HepG2 (cell line): ENCODE measurements at regions of chr1 and their contacts with region 1.

Region 1: DNA sequence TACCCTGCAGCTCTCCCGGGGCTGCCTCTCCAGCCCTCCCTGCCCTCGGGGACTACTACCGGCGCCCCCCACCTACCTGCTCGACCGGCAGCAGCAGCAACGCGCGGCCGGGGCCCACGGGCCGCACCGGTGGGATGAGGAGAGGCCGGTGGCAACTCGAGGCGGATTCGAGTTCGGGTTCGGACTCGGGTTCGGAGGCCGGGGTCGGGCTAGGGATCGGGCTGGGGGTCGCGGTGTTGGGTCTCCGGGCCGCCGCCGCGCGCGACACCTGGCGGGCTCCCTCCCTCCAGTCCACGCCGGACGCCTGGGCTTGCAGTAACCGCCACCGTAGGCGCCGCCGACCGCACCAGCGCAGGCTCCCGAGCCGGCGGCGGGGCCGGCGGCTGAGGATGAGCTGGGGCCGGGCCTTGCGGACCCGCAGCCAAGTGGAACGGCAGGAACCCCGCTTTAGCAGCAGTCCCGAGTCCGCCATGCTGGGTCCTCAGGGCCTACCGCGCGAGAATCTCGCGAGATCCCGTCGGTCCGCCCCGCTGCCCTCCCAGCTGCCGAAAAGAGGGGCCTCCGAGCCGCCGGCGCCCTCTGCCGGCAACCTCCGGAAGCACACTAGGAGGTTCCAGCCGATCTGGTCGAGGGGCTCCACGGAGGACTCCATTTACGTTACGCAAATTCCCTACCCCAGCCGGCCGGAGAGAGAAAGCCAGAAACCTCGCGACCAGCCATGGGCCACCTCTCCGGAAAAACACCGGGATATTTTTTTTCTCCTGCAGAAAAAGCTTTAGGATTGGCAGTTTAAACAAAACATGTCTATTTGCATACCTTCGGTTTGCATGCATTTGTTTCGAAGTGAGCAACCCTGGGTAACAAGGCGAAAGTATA is at the start of gene NOL9:
- DNase-seq: peak; percentile 84
- ATAC-seq: peak; percentile 93
- H3K4me3 ChIP-seq: peak within 1 kb of the TSS; percentile 93 to 98 (median 96)
- H3K27ac ChIP-seq: peak within 1 kb of the TSS; percentile 64
- H3K4me1 ChIP-seq: peaks cover 20% of the 10 kb centered on the region
- H3K27me3 ChIP-seq: no peaks in the 10 kb centered on the region; a peak in 1 of 5 replicates
- CTCF ChIP-seq: peak; percentile 93
- EP300 ChIP-seq: peak in 1 of 2 experiments; percentile 17; a peak in 1 of 4 replicates
- POLR2A ChIP-seq: peak; percentile 87 to 91
- RAD21 ChIP-seq: peak; percentile 80
- total RNA-seq, gene NOL9: 20.2 and 24.7 TPM in 2 replicates

Region 2: GRCh38 chr1:6171548-6172119 is 382.6 kb before region 1 on chr1:
- CTCF ChIA-PET with region 1: no interaction called
- POLR2A ChIA-PET with region 1: no interaction called
- in situ Hi-C with region 1: no loop called
- intact Hi-C with region 1: no loop called
- DNase-seq: peak; percentile 35
- ATAC-seq: peak; percentile 87
- H3K4me3 ChIP-seq: no peak overlapping the region
- H3K27ac ChIP-seq: no peak overlapping the region
- H3K4me1 ChIP-seq: peaks cover 15% of the 10 kb centered on the region
- H3K27me3 ChIP-seq: peaks cover 20 to 62% of the 10 kb centered on the region in 2 experiments; a peak in 4 of 5 replicates
- CTCF ChIP-seq: peak; percentile 86
- EP300 ChIP-seq: no peak
- POLR2A ChIP-seq: no peak
- RAD21 ChIP-seq: peak; percentile 73

Region 3: DNA sequence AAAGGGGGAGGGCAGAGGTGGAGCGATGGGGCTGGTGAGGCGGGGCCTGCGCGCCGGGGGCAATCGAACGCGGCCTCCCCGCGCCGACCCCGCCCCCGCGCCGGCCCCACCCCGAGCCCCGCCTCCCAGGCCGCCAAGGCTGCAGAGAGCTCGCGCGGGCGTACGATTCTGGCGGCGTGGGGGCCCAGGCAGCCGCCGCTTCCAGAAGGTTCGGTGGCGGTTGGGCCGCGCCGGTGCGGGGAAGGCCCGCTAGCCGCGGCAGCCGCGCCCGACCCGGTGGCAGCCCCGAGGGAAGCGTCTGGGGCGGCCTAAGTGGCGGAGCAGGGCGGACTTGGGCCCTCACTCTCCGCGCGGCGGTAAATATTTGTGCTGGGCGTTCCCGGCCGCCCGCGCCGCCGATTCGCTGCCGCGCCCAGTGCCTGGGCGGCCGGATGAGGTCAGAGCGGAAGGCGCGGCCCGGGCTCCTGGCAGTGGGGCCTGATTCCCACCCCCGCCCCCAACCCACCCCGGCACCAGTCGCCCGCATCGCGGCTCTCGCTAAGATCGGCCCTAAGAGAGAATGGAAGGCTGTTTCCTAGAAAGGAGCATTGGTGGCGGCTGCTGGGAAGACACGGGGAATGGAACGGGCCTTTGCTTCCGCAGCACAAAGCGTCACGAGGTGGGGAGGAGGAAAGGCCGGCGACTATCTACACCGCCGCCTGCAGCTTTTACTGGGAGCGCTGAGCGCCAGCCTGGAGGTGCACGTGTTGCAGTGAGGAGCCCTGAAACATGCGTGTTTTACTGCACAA is 160.7 kb before region 1 on chr1 and contains the start of gene ACOT7:
- CTCF ChIA-PET with region 1: no interaction called
- POLR2A ChIA-PET with region 1: no interaction called
- in situ Hi-C with region 1: no loop called
- intact Hi-C with region 1: no loop called
- DNase-seq: peak; percentile 79
- ATAC-seq: peak; percentile 93
- H3K4me3 ChIP-seq: peak within 1 kb of the TSS; percentile 66 to 76 (median 70)
- H3K27ac ChIP-seq: peak within 1 kb of the TSS; percentile 97
- H3K4me1 ChIP-seq: peaks cover 46% of the 10 kb centered on the region
- H3K27me3 ChIP-seq: no peaks in the 10 kb centered on the region
- CTCF ChIP-seq: peak; percentile 15; the same call in 1 of the 2 replicates
- EP300 ChIP-seq: no peak
- POLR2A ChIP-seq: peak; percentile 65 to 66; a peak in 3 of 4 replicates
- RAD21 ChIP-seq: peak; percentile 37; the same call in 1 of the 2 replicates
- total RNA-seq, gene ACOT7: 33.0 and 43.2 TPM in 2 replicates

Region 4: DNA sequence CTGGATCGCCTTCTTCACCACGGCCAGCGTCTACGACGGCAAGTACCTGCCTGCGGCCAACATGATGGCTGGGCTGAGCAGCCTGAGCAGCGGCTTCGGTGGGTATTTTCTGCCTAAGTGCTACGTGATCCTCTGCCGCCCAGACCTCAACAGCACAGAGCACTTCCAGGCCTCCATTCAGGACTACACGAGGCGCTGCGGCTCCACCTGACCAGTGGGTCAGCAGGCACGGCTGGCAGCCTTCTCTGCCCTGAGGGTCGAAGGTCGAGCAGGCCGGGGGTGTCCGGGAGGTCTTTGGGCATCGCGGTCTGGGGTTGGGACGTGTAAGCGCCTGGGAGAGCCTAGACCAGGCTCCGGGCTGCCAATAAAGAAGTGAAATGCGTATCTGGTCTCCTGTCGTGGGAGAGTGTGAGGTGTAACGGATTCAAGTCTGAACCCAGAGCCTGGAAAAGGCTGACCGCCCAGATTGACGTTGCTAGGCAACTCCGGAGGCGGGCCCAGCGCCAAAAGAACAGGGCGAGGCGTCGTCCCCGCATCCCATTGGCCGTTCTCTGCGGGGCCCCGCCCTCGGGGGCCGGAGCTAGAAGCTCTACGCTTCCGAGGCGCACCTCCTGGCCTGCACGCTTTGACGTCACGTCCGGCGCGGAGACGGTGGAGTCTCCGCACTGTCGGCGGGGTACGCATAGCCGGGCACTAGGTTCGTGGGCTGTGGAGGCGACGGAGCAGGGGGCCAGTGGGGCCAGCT is 25.3 kb after region 1 on chr1 and contains the start of gene ZBTB48:
- CTCF ChIA-PET with region 1: interaction called, 3 read pairs
- POLR2A ChIA-PET with region 1: interaction called, 38 read pairs
- in situ Hi-C with region 1: no loop called
- intact Hi-C with region 1: loop called (anchors 1 kb)
- DNase-seq: peak; percentile 94
- ATAC-seq: peak; percentile 84
- H3K4me3 ChIP-seq: peak within 1 kb of the TSS; percentile 88 to 98 (median 91)
- H3K27ac ChIP-seq: peak within 1 kb of the TSS; percentile 84
- H3K4me1 ChIP-seq: peaks cover 57% of the 10 kb centered on the region
- H3K27me3 ChIP-seq: no peaks in the 10 kb centered on the region
- CTCF ChIP-seq: peak; percentile 45
- EP300 ChIP-seq: no peak
- POLR2A ChIP-seq: peak; percentile 74 to 90
- RAD21 ChIP-seq: no peak
- total RNA-seq, gene ZBTB48: 13.8 and 17.1 TPM in 2 replicates

Region 5: GRCh38 chr1:6634371-6635052 is 80.2 kb after region 1 on chr1:
- CTCF ChIA-PET with region 1: interaction called, 11 read pairs
- POLR2A ChIA-PET with region 1: no interaction called
- in situ Hi-C with region 1: no loop called
- intact Hi-C with region 1: no loop called
- DNase-seq: peak; percentile 40
- ATAC-seq: peak; percentile 83
- H3K4me3 ChIP-seq: no peak overlapping the region
- H3K27ac ChIP-seq: no peak overlapping the region
- H3K4me1 ChIP-seq: no peaks in the 10 kb centered on the region
- H3K27me3 ChIP-seq: no peaks in the 10 kb centered on the region
- CTCF ChIP-seq: peak; percentile 88
- EP300 ChIP-seq: no peak
- POLR2A ChIP-seq: peak in 1 of 2 experiments; percentile 36; a peak in 2 of 4 replicates
- RAD21 ChIP-seq: peak; percentile 82

Region 6: GRCh38 chr1:6646499-6647148 is 92.4 kb after region 1 on chr1:
- CTCF ChIA-PET with region 1: interaction called, 3 read pairs
- POLR2A ChIA-PET with region 1: no interaction called
- in situ Hi-C with region 1: no loop called
- intact Hi-C with region 1: loop called (anchors 5 kb)
- DNase-seq: peak; percentile 30
- ATAC-seq: peak; percentile 44; the same call in 2 of the 3 replicates
- H3K4me3 ChIP-seq: no peak overlapping the region
- H3K27ac ChIP-seq: no peak overlapping the region
- H3K4me1 ChIP-seq: no peaks in the 10 kb centered on the region
- H3K27me3 ChIP-seq: no peaks in the 10 kb centered on the region
- CTCF ChIP-seq: peak; percentile 61
- EP300 ChIP-seq: no peak
- POLR2A ChIP-seq: no peak
- RAD21 ChIP-seq: peak; percentile 23; the same call in 1 of the 2 replicates